Left cardiac atrium (tissue), 4 donors: ENCODE measurements at regions of chr14 and their contacts with region 1.

Region 1: DNA sequence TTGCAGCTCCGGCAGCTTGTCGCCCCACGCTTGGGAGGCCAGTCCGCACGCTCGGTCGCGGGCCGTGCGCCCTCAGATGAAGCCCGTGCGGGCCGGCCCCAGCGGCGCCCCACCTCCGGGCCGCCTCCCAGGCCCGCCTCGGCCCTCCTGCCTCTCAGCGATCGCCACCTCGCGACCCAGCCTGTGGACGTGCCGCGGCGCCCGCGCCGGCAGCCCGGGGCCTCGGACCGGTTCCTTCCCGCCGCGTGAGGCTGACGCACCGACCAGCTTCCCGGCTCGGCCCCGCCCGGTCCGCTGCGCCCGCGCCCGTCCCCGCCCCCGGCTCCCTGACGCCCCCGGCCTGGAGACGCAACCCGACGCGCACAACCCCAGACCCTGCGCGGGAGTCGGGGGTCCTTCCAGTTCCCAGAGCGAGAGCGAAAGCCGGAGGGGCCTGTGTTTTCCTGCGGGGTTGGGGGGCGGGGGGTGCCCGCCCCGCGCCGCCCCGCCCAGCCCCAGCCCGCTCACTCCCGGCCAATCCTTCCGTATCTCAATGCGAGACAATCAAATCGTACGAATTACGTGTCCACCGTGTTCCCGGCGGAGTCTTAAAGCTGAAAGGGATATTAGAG is at the start of gene ERO1A:
- DNase-seq: peak; percentile 88
- ATAC-seq: peak; percentile 95 to 96
- total RNA-seq, gene ERO1A: 17.1 to 24.2 TPM

Region 2: DNA sequence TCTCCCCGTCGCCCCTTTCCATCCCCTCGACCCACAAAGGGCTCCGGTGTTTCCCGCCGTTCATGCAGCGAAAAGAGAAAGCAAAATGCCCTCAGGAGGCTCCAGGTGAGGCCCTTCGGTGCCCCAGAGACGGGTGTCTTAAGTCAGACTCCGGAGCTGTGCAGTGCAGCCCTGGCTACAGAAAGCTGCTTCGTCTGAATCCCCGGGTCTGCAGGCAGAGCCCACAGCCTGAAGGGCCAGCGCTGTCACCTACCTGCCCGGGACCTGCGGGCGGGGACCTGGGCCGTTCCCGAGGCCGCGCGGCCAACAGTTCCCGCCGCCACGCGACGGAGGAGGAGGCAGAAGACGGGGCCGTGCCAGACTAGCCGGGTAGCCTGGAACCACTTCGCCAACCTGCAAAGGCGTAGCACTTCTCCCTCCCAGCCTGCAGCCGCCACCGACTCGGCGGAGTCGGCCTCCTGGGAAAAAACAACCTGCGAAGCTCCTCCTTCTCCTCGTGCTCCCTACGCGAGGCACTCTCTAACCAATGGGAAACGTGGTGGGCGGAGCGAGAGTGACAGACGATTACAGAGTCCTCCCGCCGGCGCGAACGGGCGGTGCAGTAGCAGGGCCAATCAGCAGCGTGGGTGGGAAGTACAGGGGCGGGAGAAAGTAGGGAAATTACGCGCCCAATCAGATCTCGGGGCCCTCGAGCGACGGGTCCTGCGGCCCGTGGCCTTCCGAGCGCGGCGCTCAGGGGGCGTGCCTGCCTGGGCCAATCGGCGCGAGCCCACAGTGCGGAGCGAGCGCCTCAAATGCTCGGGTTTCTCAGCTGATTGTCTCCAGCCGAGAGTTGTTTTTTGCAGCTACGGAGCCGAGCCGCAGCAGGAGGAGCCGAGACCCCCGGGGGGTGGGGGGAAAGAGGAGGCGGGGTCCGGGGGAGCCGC is 143.3 kb before region 1 on chr14 and contains the starts of genes GPR137C and TXNDC16:
- intact Hi-C with region 1: loop called in 1 of 2 experiments (anchors 5 kb)
- DNase-seq: peak; percentile 100
- ATAC-seq: peak; percentile 98 to 99
- total RNA-seq, gene GPR137C: 0.52 to 0.74 TPM
- total RNA-seq, gene TXNDC16: 4.6 to 6.2 TPM

Region 3: DNA sequence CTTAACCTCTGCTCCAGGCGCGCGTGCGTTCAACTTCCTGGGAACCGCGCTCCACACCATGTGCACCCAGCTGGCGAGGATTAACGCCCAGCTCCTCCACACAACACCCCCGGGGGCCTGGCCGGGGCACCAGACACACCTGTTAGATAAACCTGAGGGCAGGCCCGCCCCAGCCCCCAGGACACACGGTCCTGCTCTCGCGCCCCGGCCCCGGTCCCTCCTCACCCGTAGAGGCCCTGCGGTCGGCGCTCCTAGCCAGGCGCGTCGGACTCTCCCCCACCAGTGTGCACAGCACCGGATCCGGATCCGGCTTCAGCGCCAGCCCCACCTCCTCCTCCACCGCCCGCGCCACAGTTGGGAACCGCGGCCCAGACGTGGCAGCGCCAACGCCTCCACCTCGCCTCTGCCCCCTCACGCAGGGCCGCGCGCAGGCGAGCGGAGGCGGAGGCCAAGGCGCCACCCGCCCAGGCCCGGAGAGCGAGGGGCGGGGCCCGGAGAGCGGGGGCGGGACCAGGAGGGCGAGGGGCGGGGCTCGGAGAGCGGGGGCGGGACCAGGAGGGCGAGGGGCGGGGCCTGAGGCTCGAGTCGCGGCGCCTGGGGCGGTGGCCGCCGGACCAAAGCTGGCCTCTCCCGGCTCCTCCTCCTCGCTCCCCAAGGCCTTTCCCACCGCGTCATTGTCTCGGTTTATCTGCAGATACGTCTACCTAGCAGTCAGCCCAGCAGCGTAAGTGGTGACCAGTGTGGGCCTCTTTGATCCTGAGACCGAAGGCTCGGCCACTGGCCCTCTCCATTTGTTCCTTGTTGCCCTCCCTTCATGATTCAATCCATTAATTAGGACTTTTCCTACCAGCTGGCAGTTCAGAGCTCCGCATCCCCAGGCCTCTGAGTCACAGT is 95.9 kb after region 1 on chr14 and contains the start of gene GNPNAT1:
- intact Hi-C with region 1: no loop called
- DNase-seq: peak; percentile 91
- ATAC-seq: peak; percentile 97
- total RNA-seq, gene GNPNAT1: 9.3 to 16.6 TPM